ENCODE measurements at regions of chr5 and their contacts with region 1.

Region 1: DNA sequence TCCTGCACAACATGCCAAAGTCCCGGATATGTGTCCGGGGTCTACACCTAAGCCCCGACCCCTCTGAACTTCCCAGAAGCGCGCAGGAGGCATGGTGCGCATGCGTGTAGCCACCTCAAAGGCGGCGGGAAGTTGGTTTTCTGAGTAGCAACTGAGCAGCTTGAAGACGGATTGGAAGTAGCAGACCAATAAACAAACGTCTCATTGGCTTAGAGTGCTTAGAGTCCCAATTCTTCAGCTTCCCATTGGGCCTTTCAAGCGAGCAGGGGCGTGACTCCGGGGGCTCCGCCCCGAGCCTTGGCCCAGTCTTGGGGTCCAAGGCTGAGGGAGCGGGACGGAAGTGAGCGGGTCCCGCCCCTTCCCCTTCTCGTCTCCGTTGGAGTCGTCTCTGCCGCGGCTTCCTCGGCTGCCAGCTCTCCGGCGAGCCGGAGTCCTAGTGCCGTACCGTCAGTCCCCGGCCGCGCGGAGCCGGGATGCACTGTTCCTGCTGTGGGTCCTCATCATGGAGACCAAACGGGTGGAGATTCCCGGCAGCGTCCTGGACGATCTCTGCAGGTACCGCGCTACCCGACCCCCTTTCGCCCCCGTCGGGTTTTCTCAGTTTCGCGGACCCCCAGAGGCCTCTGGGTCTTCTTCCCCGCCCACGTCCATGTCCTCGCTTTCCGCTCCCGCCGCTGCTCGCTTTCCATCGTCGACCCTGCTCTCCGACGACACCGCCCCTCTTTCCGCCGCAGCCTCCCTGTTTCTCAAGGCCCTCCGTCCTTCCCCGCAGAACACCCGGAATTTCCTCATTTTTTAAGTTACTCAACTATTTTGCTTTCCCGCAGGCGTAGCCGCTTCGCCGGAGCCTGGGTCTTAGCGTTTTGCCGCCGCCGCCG is at the start of gene DCP2:
- H3K4me3 ChIP-seq: peak within 1 kb of the TSS; percentile 96
- H3K27ac ChIP-seq: peak within 1 kb of the TSS; percentile 89
- H3K4me1 ChIP-seq: peaks cover 16% of the 10 kb centered on the region
- CTCF ChIP-seq: peak; percentile 59; the same call in 1 of the 2 replicates

Region 2: DNA sequence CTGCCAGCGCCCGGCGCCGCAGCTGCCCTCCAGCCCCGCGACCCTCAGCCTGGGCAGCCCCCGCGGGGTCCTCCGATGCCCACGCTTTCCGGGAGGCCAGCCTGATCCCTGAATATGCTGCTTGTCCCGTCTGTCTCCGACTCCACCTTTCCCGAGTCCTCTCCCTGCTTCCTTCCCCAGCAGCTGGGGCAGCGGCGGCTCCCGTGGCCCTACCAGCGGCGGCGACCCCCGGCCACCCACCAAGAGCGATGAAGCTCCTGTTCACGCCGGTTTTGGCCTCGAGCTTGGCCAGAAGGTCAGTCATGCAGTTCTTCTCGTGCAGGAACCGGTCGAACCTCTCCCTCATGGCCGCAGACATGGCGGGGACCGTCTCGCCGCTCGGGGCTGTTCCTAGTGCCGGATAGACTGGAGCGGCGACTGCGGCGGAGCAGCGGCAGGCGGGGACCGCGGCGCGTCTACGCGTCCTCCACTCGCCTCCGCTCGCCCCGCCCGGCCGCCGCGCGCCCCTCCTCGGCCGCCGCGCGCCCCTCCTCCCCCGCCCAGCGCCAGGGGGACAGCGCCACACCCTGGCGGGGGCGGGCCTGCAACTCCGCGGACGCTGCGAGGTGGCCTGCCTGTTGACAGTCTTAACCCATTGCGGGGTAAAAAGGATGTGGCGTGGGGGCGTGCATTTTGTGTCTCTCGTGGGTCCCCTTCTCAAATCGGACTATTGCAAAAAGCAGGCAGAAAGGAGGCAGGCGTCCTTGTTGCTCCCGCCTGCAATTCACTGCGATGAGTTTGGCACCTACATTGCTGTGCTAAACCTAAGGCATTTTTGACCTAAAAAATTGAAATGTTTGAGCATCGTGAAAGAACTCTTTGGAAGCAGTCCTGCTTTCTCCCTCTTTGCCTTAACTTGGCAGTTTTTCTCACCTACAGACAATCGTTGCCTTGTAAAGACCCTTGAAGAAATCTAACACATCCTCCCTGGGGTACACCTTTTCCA is 54.5 kb before region 1 on chr5 and contains the start of gene REEP5:
- CTCF ChIA-PET with region 1: interaction called, 4 read pairs
- POLR2A ChIA-PET with region 1: interaction called, 21 read pairs
- H3K4me3 ChIP-seq: peak within 1 kb of the TSS; percentile 97
- H3K27ac ChIP-seq: peak within 1 kb of the TSS; percentile 97
- H3K4me1 ChIP-seq: no peaks in the 10 kb centered on the region
- CTCF ChIP-seq: peak; percentile 65

Region 3: GRCh38 chr5:112960315-112960714 is 16.4 kb before region 1 on chr5:
- CTCF ChIA-PET with region 1: interaction called, 6 read pairs
- POLR2A ChIA-PET with region 1: interaction called, 23 read pairs
- H3K4me3 ChIP-seq: no peak overlapping the region
- H3K27ac ChIP-seq: no peak overlapping the region
- H3K4me1 ChIP-seq: peaks cover 14% of the 10 kb centered on the region
- CTCF ChIP-seq: no peak